ENCODE measurements at regions of chr4 and their contacts with region 1.

Region 1: GRCh38 chr4:79042079-79042674 is 102.9 kb upstream of the PAQR3 start:
- DNase-seq: peak; percentile 13 to 69 (median 38)
- ATAC-seq: peak; percentile 84
- H3K4me3 ChIP-seq: no peak overlapping the region
- H3K27ac ChIP-seq: no peak overlapping the region
- H3K4me1 ChIP-seq: peaks cover 0 to 8% of the 10 kb centered on the region in 2 experiments; a peak in 1 of 5 replicates
- H3K27me3 ChIP-seq: no peaks in the 10 kb centered on the region
- CTCF ChIP-seq: peak; percentile 57 to 75 (median 58); a peak in 4 of 6 replicates
- EP300 ChIP-seq: no peak
- POLR2A ChIP-seq: no peak
- RAD21 ChIP-seq: peak; percentile 82 to 91

Region 2: DNA sequence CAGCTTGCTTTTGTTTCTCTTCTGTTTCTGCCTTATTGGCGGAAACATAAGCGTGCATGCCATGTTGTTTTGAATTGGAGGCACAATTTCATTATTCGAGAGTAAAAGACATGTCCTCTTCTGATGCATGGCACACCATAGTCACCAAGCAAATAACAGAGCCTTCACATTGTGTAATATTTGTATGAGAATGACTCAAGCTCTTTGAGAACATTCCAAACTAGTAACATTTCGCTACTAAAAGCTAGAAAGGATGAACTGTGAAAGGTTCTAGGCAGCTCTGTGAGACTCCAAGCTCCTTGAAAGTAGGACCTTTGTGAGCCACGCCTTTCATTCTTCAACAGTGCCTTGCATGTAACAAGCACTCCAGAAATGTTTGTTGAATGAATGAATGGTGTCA is 499.8 kb before region 1 on chr4:
- CTCF ChIA-PET with region 1: no interaction called
- POLR2A ChIA-PET with region 1: no interaction called
- in situ Hi-C with region 1: no loop called
- intact Hi-C with region 1: no loop called
- DNase-seq: no peak
- ATAC-seq: no peak
- H3K4me3 ChIP-seq: no peak overlapping the region
- H3K27ac ChIP-seq: no peak overlapping the region
- H3K4me1 ChIP-seq: no peaks in the 10 kb centered on the region; a peak in 1 of 5 replicates
- H3K27me3 ChIP-seq: peaks cover 5 to 6% of the 10 kb centered on the region in 2 experiments; a peak in 4 of 5 replicates
- CTCF ChIP-seq: no peak
- EP300 ChIP-seq: no peak
- POLR2A ChIP-seq: no peak
- RAD21 ChIP-seq: no peak

Region 3: DNA sequence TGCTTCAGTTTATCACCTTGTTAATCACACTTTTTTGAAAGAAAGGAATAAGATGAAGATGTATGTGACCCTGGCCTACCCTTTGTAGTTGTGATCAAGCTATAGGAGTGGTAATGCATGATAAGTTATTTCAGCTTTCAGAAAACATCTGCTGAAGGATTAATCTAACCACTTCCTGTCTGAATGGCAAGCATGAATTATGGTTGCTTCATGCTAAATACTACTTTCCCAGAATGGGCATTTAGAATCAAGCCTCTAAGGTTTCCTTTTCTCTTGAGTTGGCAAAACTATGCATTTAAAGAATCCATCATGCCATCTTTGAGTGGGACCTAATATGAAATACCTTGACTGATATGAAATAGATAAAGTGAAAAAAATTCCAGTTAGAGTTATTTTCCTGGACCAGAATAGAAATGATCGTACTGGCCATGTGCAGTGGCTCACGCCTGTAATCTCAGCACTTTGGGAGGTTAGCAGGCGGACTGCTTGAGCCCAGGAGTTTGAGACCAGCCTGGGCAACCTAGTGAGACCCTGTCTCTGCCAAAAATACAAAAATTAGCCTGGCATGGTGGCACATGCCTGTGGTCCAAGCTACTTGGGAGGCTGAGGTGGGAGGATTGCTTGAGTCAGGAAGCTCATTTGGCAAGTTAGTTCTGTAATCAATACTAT is 431.5 kb before region 1 on chr4:
- CTCF ChIA-PET with region 1: no interaction called
- POLR2A ChIA-PET with region 1: no interaction called
- in situ Hi-C with region 1: no loop called
- intact Hi-C with region 1: no loop called
- DNase-seq: peak; percentile 37 to 79 (median 60)
- ATAC-seq: peak; percentile 69
- H3K4me3 ChIP-seq: no peak overlapping the region
- H3K27ac ChIP-seq: peak overlapping the region; percentile 44; the same call in 2 of the 3 replicates
- H3K4me1 ChIP-seq: peaks cover 18 to 69% of the 10 kb centered on the region in 2 experiments
- H3K27me3 ChIP-seq: no peaks in the 10 kb centered on the region
- CTCF ChIP-seq: no peak
- EP300 ChIP-seq: peak; percentile 97
- POLR2A ChIP-seq: no peak
- RAD21 ChIP-seq: no peak; a peak in 2 of 4 replicates

Region 4: DNA sequence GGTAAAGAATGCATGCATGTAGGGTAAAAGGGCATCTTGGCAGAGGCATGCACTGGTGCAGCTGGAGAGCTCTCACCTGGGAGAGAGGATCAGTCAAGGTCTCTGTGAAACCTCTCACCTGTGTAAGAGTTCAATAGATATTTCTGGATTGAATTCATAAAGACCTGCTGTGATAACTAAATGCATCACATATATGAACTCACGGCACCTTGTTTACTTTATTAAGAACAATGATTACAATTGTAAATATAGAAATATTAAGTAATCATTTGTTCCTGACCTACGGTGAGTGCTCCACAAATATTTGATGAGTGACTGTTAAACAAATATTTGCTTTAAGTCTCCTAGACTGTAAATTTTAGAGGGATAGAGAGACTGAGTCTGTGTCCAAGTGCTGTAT is 17.0 kb before region 1 on chr4:
- CTCF ChIA-PET with region 1: no interaction called
- POLR2A ChIA-PET with region 1: no interaction called
- in situ Hi-C with region 1: no loop called
- intact Hi-C with region 1: no loop called
- DNase-seq: no peak
- ATAC-seq: no peak
- H3K4me3 ChIP-seq: no peak overlapping the region
- H3K27ac ChIP-seq: no peak overlapping the region
- H3K4me1 ChIP-seq: peaks cover 0 to 2% of the 10 kb centered on the region in 2 experiments; a peak in 2 of 5 replicates
- H3K27me3 ChIP-seq: no peaks in the 10 kb centered on the region
- CTCF ChIP-seq: no peak
- EP300 ChIP-seq: no peak
- POLR2A ChIP-seq: no peak
- RAD21 ChIP-seq: no peak

Region 5: DNA sequence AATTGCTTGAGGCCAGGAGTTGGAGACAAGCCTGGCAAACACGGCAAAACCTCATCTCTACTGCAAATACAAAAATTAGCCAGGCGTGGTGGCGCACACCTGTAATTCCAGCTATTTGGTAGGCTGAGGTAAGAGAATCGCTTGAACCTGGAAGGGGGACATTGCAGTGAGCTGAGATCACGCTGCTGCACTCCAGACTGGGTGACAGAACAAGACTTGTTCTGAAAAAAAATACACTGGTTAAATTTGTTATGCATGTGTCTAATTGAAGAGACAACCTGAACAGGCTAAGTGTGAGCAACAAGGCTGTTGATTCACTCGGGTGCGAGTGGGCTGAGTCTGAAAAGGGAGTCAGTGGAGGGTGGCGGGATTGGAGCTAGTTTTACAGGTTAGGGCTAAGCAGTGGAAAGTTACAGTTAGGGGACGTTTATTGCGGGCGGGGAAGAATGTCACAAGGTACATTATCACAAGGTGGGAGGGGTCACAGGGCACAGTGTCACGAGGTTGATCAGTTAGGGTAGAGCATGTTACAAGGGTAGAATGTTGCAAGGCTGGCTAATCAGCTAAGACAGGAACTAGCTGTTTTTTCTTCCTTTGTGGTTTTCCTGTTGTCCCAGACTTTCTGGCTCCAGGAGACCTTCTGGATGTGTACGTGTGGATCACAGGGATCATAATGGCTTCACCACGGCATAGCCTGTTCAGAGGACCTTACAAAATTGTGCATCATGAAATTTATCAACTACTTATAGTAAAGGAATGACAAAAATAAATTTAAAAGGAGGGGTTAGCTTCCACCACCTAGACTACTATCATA is 167.9 kb after region 1 on chr4:
- CTCF ChIA-PET with region 1: no interaction called
- POLR2A ChIA-PET with region 1: no interaction called
- in situ Hi-C with region 1: no loop called
- intact Hi-C with region 1: loop called (anchors 5 kb)
- DNase-seq: peak; percentile 29 to 97 (median 55)
- ATAC-seq: peak; percentile 76
- H3K4me3 ChIP-seq: peak overlapping the region; percentile 42
- H3K27ac ChIP-seq: peak overlapping the region; percentile 95
- H3K4me1 ChIP-seq: peaks cover 4 to 32% of the 10 kb centered on the region in 2 experiments; a peak in 3 of 5 replicates
- H3K27me3 ChIP-seq: no peaks in the 10 kb centered on the region
- CTCF ChIP-seq: no peak
- EP300 ChIP-seq: peak; percentile 99
- POLR2A ChIP-seq: peak; percentile 80
- RAD21 ChIP-seq: no peak; a peak in 1 of 4 replicates

Region 6: GRCh38 chr4:79317711-79318110 is 275.5 kb after region 1 on chr4:
- CTCF ChIA-PET with region 1: no interaction called
- POLR2A ChIA-PET with region 1: no interaction called
- in situ Hi-C with region 1: no loop called
- intact Hi-C with region 1: loop called (anchors 2 kb)
- DNase-seq: peak in 1 of 4 experiments; percentile 24
- ATAC-seq: peak; percentile 51
- H3K4me3 ChIP-seq: no peak overlapping the region
- H3K27ac ChIP-seq: peak overlapping the region; percentile 46; the same call in 1 of the 3 replicates
- H3K4me1 ChIP-seq: peaks cover 0 to 5% of the 10 kb centered on the region in 2 experiments; a peak in 2 of 5 replicates
- H3K27me3 ChIP-seq: no peaks in the 10 kb centered on the region
- CTCF ChIP-seq: no peak
- EP300 ChIP-seq: no peak
- POLR2A ChIP-seq: no peak
- RAD21 ChIP-seq: no peak

Region 7: GRCh38 chr4:79450053-79450452 is 407.9 kb after region 1 on chr4:
- CTCF ChIA-PET with region 1: no interaction called
- POLR2A ChIA-PET with region 1: no interaction called
- in situ Hi-C with region 1: no loop called
- intact Hi-C with region 1: loop called (anchors 10 kb)
- DNase-seq: no peak
- ATAC-seq: no peak
- H3K4me3 ChIP-seq: no peak overlapping the region
- H3K27ac ChIP-seq: no peak overlapping the region
- H3K4me1 ChIP-seq: no peaks in the 10 kb centered on the region
- H3K27me3 ChIP-seq: no peaks in the 10 kb centered on the region
- CTCF ChIP-seq: no peak
- EP300 ChIP-seq: no peak
- POLR2A ChIP-seq: no peak
- RAD21 ChIP-seq: no peak

Region 8: GRCh38 chr4:79609817-79610216 is 567.6 kb after region 1 on chr4:
- CTCF ChIA-PET with region 1: no interaction called
- POLR2A ChIA-PET with region 1: no interaction called
- in situ Hi-C with region 1: no loop called
- intact Hi-C with region 1: no loop called
- DNase-seq: no peak
- ATAC-seq: no peak
- H3K4me3 ChIP-seq: no peak overlapping the region
- H3K27ac ChIP-seq: no peak overlapping the region
- H3K4me1 ChIP-seq: no peaks in the 10 kb centered on the region
- H3K27me3 ChIP-seq: no peaks in the 10 kb centered on the region
- CTCF ChIP-seq: no peak
- EP300 ChIP-seq: no peak
- POLR2A ChIP-seq: no peak
- RAD21 ChIP-seq: no peak